H1 (cell line): ENCODE measurements at regions of chr19 and their contacts with region 1.

Region 1: GRCh38 chr19:10388957-10389356 is 8.6 kb upstream of the TYK2 start:
- DNase-seq: peak; percentile 77 to 99
- H3K4me3 ChIP-seq: no peak overlapping the region
- H3K27ac ChIP-seq: no peak overlapping the region
- H3K4me1 ChIP-seq: peaks cover 0 to 3% (median 0%) of the 10 kb centered on the region in 4 experiments; a peak in 1 of 7 replicates
- H3K27me3 ChIP-seq: no peaks in the 10 kb centered on the region
- CTCF ChIP-seq: peak; percentile 82 to 94 (median 94)
- EP300 ChIP-seq: no peak
- POLR2A ChIP-seq: no peak
- RAD21 ChIP-seq: peak; percentile 87 to 90

Region 2: GRCh38 chr19:10269333-10270179 is 119.4 kb before region 1 on chr19:
- CTCF ChIA-PET with region 1: interaction called, 122 read pairs
- POLR2A ChIA-PET with region 1: interaction called, 28 read pairs
- DNase-seq: peak in 1 of 2 experiments; percentile 99
- H3K4me3 ChIP-seq: peak overlapping the region; percentile 30 to 59 (median 38); a peak in 5 of 8 replicates
- H3K27ac ChIP-seq: no peak overlapping the region
- H3K4me1 ChIP-seq: peaks cover 0 to 8% (median 5%) of the 10 kb centered on the region in 4 experiments; a peak in 5 of 7 replicates
- H3K27me3 ChIP-seq: peaks cover 9 to 25% (median 23%) of the 10 kb centered on the region in 4 experiments
- CTCF ChIP-seq: peak; percentile 79 to 95 (median 88)
- EP300 ChIP-seq: no peak; a peak in 1 of 3 replicates
- POLR2A ChIP-seq: no peak
- RAD21 ChIP-seq: peak; percentile 94 to 97

Region 3: GRCh38 chr19:10315335-10316214 is 73.4 kb before region 1 on chr19 and contains the start of gene FDX2:
- CTCF ChIA-PET with region 1: interaction called, 13 read pairs
- POLR2A ChIA-PET with region 1: no interaction called
- DNase-seq: peak; percentile 79 to 97
- H3K4me3 ChIP-seq: peak within 1 kb of the TSS; percentile 80 to 94 (median 92)
- H3K27ac ChIP-seq: peak within 1 kb of the TSS; percentile 72
- H3K4me1 ChIP-seq: no peaks in the 10 kb centered on the region; a peak in 1 of 7 replicates
- H3K27me3 ChIP-seq: no peaks in the 10 kb centered on the region
- CTCF ChIP-seq: no peak
- EP300 ChIP-seq: no peak
- POLR2A ChIP-seq: peak; percentile 78 to 91
- RAD21 ChIP-seq: peak in 1 of 2 experiments; percentile 4; a peak in 1 of 4 replicates
- total RNA-seq, gene FDX2: 27.0 and 27.8 TPM in 2 replicates

Region 4: DNA sequence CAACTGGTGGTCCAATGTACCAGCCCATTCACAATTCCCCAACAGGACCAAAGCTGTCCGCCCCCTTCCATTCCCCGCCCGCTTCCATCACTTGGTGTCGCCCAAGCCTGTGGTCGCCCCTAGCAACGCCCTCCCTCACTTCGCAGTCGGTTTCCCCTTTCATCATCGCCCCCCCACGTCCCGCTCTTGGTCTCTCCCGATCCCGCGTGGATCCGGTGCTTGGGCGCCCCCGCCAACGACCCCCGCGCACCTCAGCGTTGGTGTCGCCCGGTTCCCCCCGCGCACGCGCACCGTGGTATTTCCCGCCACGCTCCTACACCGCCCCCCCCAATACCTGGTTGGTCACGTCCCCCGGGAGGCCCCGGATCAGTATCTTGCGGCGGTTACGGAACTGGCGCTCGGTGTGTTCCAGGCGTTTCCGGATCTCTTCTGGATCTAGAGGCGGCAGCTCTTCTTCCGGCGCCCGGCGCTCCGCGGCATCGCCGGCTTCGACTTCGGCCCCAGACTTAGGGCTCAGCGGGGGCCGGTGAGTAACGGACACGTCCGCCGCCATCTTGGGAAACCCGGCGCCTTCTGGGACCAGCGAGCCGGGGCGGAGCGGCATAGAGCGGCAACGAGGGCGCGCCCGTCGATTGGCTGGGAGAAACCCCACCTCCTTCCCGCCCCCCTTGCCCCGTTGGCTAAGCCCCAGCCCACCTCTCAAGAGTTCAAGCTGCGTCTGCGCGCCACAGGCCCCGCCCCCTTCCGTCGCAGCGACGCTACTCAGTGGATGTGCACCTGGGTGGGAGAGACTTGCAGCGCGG is 55.8 kb before region 1 on chr19 and contains the start of gene RAVER1:
- CTCF ChIA-PET with region 1: interaction called, 21 read pairs
- POLR2A ChIA-PET with region 1: no interaction called
- DNase-seq: peak; percentile 84 to 94
- H3K4me3 ChIP-seq: peak within 1 kb of the TSS; percentile 75 to 96 (median 90)
- H3K27ac ChIP-seq: peak within 1 kb of the TSS; percentile 76
- H3K4me1 ChIP-seq: peaks cover 0 to 19% (median 7%) of the 10 kb centered on the region in 4 experiments; a peak in 6 of 7 replicates
- H3K27me3 ChIP-seq: peaks cover 0 to 3% (median 0%) of the 10 kb centered on the region in 4 experiments; a peak in 2 of 7 replicates
- CTCF ChIP-seq: no peak
- EP300 ChIP-seq: peak in 1 of 2 experiments; percentile 90; a peak in 2 of 3 replicates
- POLR2A ChIP-seq: peak in 1 of 2 experiments; percentile 78; a peak in 1 of 3 replicates
- RAD21 ChIP-seq: no peak
- total RNA-seq, gene RAVER1: 70.5 and 72.4 TPM in 2 replicates

Region 5: GRCh38 chr19:10372690-10373089 is 16.3 kb before region 1 on chr19:
- CTCF ChIA-PET with region 1: interaction called, 47 read pairs
- POLR2A ChIA-PET with region 1: interaction called, 4 read pairs
- DNase-seq: no peak
- H3K4me3 ChIP-seq: no peak overlapping the region
- H3K27ac ChIP-seq: no peak overlapping the region
- H3K4me1 ChIP-seq: no peaks in the 10 kb centered on the region
- H3K27me3 ChIP-seq: no peaks in the 10 kb centered on the region
- CTCF ChIP-seq: no peak
- EP300 ChIP-seq: no peak
- POLR2A ChIP-seq: no peak
- RAD21 ChIP-seq: no peak

Region 6: GRCh38 chr19:10416380-10417257 is 27.7 kb after region 1 on chr19:
- CTCF ChIA-PET with region 1: interaction called, 11 read pairs
- POLR2A ChIA-PET with region 1: no interaction called
- DNase-seq: peak; percentile 83 to 100
- H3K4me3 ChIP-seq: peak overlapping the region; percentile 42 to 66 (median 54)
- H3K27ac ChIP-seq: no peak overlapping the region
- H3K4me1 ChIP-seq: peaks cover 5 to 26% (median 13%) of the 10 kb centered on the region in 4 experiments
- H3K27me3 ChIP-seq: peaks cover 25 to 62% (median 52%) of the 10 kb centered on the region in 4 experiments
- CTCF ChIP-seq: peak; percentile 69 to 79 (median 78)
- EP300 ChIP-seq: peak in 1 of 2 experiments; percentile 85; a peak in 1 of 3 replicates
- POLR2A ChIP-seq: no peak
- RAD21 ChIP-seq: peak; percentile 28 to 30; a peak in 3 of 4 replicates